CD4-positive, alpha-beta T cell (primary cell): ENCODE measurements at regions of chr16 and their contacts with region 1.

Region 1: GRCh38 chr16:4253394-4254150 is 11.7 kb upstream of the SRL start:
- DNase-seq: peak; percentile 99 to 100 (median 99)
- ATAC-seq: peak; percentile 94
- H3K4me3 ChIP-seq: peak overlapping the region; percentile 91
- H3K4me3 Mint-ChIP-seq: peak overlapping the region; percentile 96
- H3K27ac ChIP-seq: peak overlapping the region; percentile 86 to 88
- H3K27ac Mint-ChIP-seq: peak overlapping the region; percentile 96
- H3K4me1 ChIP-seq: peaks cover 18% of the 10 kb centered on the region
- H3K4me1 Mint-ChIP-seq: peaks cover 10% of the 10 kb centered on the region
- H3K27me3 ChIP-seq: no peaks in the 10 kb centered on the region
- H3K27me3 Mint-ChIP-seq: no peaks in the 10 kb centered on the region
- CTCF ChIP-seq: no peak

Region 2: GRCh38 chr16:3938848-3939624 is 314.5 kb before region 1 on chr16:
- CTCF ChIA-PET with region 1: interaction called, 8 read pairs
- POLR2A ChIA-PET with region 1: no interaction called
- intact Hi-C with region 1: loop called (anchors 2 to 5 kb)
- DNase-seq: peak; percentile 42 to 82 (median 61)
- ATAC-seq: peak; percentile 84
- H3K4me3 ChIP-seq: peak overlapping the region; percentile 33
- H3K4me3 Mint-ChIP-seq: no peak overlapping the region
- H3K27ac ChIP-seq: no peak overlapping the region
- H3K27ac Mint-ChIP-seq: no peak overlapping the region
- H3K4me1 ChIP-seq: peaks cover 11% of the 10 kb centered on the region
- H3K4me1 Mint-ChIP-seq: no peaks in the 10 kb centered on the region
- H3K27me3 ChIP-seq: peaks cover 0 to 6% of the 10 kb centered on the region in 2 experiments
- H3K27me3 Mint-ChIP-seq: peaks cover 3% of the 10 kb centered on the region
- CTCF ChIP-seq: peak; percentile 96

Region 3: DNA sequence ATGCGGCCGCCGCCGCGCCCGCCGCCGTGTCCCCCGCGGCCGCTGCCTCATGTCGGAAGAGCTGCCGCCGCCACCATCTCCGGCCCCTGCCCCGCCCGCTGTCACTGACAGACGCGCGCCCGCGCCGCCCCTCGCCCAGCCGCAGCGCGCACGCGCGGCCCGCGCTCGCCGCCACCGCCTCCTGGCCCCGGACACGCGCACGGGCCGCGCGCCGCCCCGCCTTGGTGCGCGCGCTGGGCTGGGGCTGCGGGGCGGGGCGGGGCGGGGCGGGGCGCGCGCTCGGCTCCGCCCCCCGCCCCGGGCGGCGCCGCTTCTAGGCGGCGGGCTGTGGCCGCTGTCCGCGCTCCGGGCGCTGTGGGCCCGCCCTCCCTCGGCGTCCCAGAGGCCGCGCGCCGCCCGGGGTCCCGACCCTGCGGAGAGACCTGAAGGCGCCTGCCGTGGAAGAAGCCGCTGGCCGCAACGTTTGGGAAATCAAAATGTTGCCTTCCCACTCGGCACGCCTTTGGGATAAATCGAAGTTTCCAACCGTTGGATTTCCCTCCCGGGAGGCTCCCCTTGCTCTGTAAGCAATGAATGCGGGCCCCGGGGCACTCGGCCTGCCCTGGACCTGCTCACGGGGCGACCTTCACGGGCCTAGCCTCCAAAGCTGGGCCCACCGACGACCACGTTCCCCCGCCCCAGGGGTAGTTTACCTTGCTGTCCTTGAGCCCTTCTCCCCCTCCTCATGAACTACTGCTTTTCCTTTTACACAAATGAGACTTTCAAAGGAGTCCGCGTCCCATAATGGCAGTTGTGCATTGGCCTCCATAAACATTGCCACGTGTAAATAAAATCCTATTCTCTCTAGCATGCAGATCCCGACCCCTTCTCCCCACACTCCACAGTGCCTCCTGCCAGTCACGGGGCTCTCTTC is 137.0 kb before region 1 on chr16 and contains the start of gene ADCY9:
- CTCF ChIA-PET with region 1: interaction called, 12 read pairs
- POLR2A ChIA-PET with region 1: interaction called, 25 read pairs
- intact Hi-C with region 1: loop called in 1 of 2 experiments (anchors 1 kb)
- DNase-seq: peak; percentile 53 to 94 (median 74)
- ATAC-seq: peak; percentile 62
- H3K4me3 ChIP-seq: peak within 1 kb of the TSS; percentile 62
- H3K4me3 Mint-ChIP-seq: peak within 1 kb of the TSS; percentile 96
- H3K27ac ChIP-seq: no peak within 1 kb of the TSS
- H3K27ac Mint-ChIP-seq: peak within 1 kb of the TSS; percentile 69
- H3K4me1 ChIP-seq: peaks cover 42% of the 10 kb centered on the region
- H3K4me1 Mint-ChIP-seq: peaks cover 38% of the 10 kb centered on the region
- H3K27me3 ChIP-seq: no peaks in the 10 kb centered on the region
- H3K27me3 Mint-ChIP-seq: no peaks in the 10 kb centered on the region
- CTCF ChIP-seq: no peak
- total RNA-seq, gene ADCY9: 7.1 to 7.4 TPM

Region 4: GRCh38 chr16:4271176-4272066 is 17.8 kb after region 1 on chr16:
- CTCF ChIA-PET with region 1: interaction called, 83 read pairs
- POLR2A ChIA-PET with region 1: interaction called, 179 read pairs
- intact Hi-C with region 1: loop called (anchors 1 kb)
- DNase-seq: peak; percentile 74 to 93 (median 86)
- ATAC-seq: peak; percentile 81
- H3K4me3 ChIP-seq: peak overlapping the region; percentile 100
- H3K4me3 Mint-ChIP-seq: peak overlapping the region; percentile 89
- H3K27ac ChIP-seq: peak overlapping the region; percentile 68 to 72
- H3K27ac Mint-ChIP-seq: peak overlapping the region; percentile 97
- H3K4me1 ChIP-seq: peaks cover 25% of the 10 kb centered on the region
- H3K4me1 Mint-ChIP-seq: peaks cover 11% of the 10 kb centered on the region
- H3K27me3 ChIP-seq: no peaks in the 10 kb centered on the region
- H3K27me3 Mint-ChIP-seq: peaks cover 5% of the 10 kb centered on the region
- CTCF ChIP-seq: no peak

Region 5: GRCh38 chr16:4846891-4847773 is 593.6 kb after region 1 on chr16 and contains the starts of genes GLYR1 and UBN1:
- CTCF ChIA-PET with region 1: no interaction called
- POLR2A ChIA-PET with region 1: no interaction called
- intact Hi-C with region 1: loop called in 1 of 2 experiments (anchors 5 kb)
- DNase-seq: peak; percentile 98 to 100 (median 99)
- ATAC-seq: peak; percentile 90
- H3K4me3 ChIP-seq: peak within 1 kb of the TSS; percentile 95
- H3K4me3 Mint-ChIP-seq: peak within 1 kb of the TSS; percentile 93
- H3K27ac ChIP-seq: peak within 1 kb of the TSS; percentile 75 to 93
- H3K27ac Mint-ChIP-seq: peak within 1 kb of the TSS; percentile 85
- H3K4me1 ChIP-seq: peaks cover 46% of the 10 kb centered on the region
- H3K4me1 Mint-ChIP-seq: peaks cover 57% of the 10 kb centered on the region
- H3K27me3 ChIP-seq: no peaks in the 10 kb centered on the region
- H3K27me3 Mint-ChIP-seq: no peaks in the 10 kb centered on the region
- CTCF ChIP-seq: no peak
- total RNA-seq, gene GLYR1: 71.7 to 77.2 TPM
- total RNA-seq, gene UBN1: 45.7 to 45.8 TPM